ENCODE measurements at regions of chr15 and their contacts with region 1.

Region 1: DNA sequence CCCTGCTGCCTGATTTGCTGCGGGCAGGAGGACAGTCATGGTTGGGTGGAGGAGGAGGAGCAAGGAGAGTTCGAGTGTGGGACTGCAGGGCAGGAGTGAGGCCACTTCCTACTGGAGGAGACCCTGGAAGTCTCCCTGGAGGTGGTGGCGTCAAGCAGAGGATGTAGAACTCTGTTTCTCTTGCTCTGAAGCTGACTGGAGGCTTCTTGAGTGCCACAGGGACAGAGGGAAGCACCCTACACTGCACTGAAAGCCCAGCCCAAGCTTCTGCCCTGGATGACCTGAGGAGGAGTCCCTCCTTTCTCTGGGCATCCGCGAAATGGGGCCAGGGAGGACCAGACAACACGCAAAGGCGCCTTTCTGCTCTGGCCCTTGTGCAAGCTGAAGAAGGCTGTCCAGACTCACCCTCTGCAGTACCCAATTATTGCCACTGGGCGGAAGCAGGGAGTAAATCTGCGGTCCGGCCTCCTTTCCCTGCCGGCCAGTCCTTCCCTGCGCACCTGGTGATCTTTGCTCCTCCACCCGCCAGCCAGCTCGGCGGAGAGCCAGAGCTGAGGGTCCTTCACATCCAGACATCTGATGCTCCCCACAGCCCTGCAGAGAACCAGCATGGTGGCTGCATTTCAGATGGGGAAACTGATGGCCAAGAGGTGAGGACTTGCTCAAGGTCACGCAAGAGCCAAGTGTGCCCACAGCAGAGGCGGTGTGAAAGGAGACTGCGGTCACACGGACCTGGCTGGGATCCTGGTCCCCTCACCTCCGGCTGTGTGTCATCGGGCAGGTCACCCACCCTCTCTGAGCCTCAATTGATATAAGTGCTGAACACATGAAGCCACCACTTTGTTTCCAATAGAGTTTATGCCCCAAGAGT is 207.1 kb downstream of the TBC1D2B start:
- DNase-seq: peak; percentile 92
- ATAC-seq: peak; percentile 78
- H3K4me3 Mint-ChIP-seq: no peak overlapping the region
- H3K27ac Mint-ChIP-seq: no peak overlapping the region
- H3K4me1 Mint-ChIP-seq: peaks cover 4% of the 10 kb centered on the region; the same call in 1 of the 2 replicates
- H3K27me3 Mint-ChIP-seq: no peaks in the 10 kb centered on the region; the same call in none of the 2 replicates
- CTCF ChIP-seq: peak; percentile 90

Region 2: GRCh38 chr15:77642793-77643430 is 227.5 kb before region 1 on chr15:
- CTCF ChIA-PET with region 1: interaction called, 10 read pairs
- POLR2A ChIA-PET with region 1: no interaction called
- DNase-seq: no peak
- ATAC-seq: peak; percentile 14
- H3K4me3 Mint-ChIP-seq: no peak overlapping the region
- H3K27ac Mint-ChIP-seq: no peak overlapping the region
- H3K4me1 Mint-ChIP-seq: peaks cover 13% of the 10 kb centered on the region
- H3K27me3 Mint-ChIP-seq: no peaks in the 10 kb centered on the region
- CTCF ChIP-seq: no peak

Region 3: GRCh38 chr15:77810130-77810571 is 60.3 kb before region 1 on chr15:
- CTCF ChIA-PET with region 1: interaction called, 11 read pairs
- POLR2A ChIA-PET with region 1: no interaction called
- DNase-seq: no peak
- ATAC-seq: peak; percentile 14; the same call in 1 of the 2 replicates
- H3K4me3 Mint-ChIP-seq: no peak overlapping the region
- H3K27ac Mint-ChIP-seq: peak overlapping the region; percentile 82
- H3K4me1 Mint-ChIP-seq: peaks cover 29% of the 10 kb centered on the region
- H3K27me3 Mint-ChIP-seq: no peaks in the 10 kb centered on the region
- CTCF ChIP-seq: no peak

Region 4: DNA sequence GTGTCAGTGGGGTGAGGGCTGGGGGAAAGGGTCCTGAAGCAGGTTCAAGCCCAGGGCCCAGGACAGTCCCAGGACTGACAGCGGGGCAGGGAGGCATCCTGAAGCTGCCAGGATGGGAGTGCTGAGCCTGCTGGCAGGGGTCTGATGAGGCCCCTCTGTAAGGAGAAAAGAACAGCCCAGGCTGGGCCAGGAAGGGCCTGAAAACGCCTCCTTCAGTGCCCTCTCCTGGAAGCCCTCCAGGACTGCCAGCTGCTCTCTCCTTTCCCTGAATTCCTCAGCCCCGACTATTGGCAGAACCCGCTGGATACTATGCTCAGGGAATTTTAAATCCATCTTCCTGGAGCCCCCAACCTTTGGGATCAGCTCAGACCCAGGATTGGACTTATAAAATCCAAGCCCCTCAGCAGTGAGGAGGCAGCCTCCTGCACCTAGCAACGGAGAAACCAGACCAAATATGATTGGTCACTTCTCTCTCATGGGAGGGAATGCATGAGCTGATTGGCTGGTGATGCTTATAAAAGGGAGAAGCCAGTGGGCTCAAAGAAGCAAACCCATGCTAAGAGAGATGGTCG is 34.2 kb before region 1 on chr15:
- CTCF ChIA-PET with region 1: interaction called, 23 read pairs
- POLR2A ChIA-PET with region 1: no interaction called
- DNase-seq: no peak
- ATAC-seq: peak; percentile 84
- H3K4me3 Mint-ChIP-seq: no peak overlapping the region
- H3K27ac Mint-ChIP-seq: no peak overlapping the region
- H3K4me1 Mint-ChIP-seq: peaks cover 16% of the 10 kb centered on the region
- H3K27me3 Mint-ChIP-seq: no peaks in the 10 kb centered on the region; the same call in 1 of the 2 replicates
- CTCF ChIP-seq: no peak

Region 5: DNA sequence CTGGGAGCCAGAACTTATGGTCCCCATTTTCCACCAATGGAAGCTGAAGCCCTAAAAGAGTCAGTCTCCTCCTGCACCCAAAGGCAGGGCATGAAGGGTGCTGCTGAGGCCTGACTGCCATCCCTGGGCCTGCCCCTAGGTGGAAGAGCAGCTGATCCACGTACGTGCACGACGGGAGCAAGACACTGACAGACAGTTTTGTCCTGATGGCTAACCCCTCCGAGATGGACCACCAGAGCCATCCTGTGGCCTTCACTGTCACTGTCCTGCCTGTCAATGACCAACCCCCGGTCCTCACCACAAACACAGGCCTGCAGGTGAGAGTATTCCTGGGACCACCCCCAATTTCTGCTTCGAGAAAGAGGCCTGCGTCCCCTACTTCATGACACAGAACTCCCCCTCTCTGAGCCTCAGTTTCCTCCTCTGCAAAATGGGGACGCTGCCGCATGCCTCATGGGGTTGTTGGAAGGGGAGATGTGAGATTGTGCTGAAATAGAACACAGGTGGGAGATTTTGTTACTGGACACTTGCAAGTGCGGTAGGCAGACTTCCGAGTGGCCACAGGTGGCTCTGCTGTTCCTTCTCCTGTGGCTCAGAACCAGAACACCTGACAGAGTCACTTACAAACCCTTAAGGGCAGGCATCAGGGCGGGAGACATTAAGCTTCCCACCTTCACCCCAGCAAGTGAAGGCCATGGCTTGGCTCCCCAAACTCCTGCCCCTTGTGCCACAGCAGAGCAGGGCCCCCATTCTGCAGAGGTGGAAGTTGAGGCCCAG is 31.7 kb after region 1 on chr15:
- CTCF ChIA-PET with region 1: interaction called, 10 read pairs
- POLR2A ChIA-PET with region 1: no interaction called
- DNase-seq: peak; percentile 50
- ATAC-seq: no peak
- H3K4me3 Mint-ChIP-seq: no peak overlapping the region
- H3K27ac Mint-ChIP-seq: no peak overlapping the region
- H3K4me1 Mint-ChIP-seq: no peaks in the 10 kb centered on the region
- H3K27me3 Mint-ChIP-seq: no peaks in the 10 kb centered on the region
- CTCF ChIP-seq: no peak

Region 6: GRCh38 chr15:77907824-77908751 is 37.7 kb after region 1 on chr15:
- CTCF ChIA-PET with region 1: interaction called, 10 read pairs
- POLR2A ChIA-PET with region 1: no interaction called
- DNase-seq: peak; percentile 85
- ATAC-seq: peak; percentile 88
- H3K4me3 Mint-ChIP-seq: no peak overlapping the region
- H3K27ac Mint-ChIP-seq: no peak overlapping the region
- H3K4me1 Mint-ChIP-seq: peaks cover 17% of the 10 kb centered on the region
- H3K27me3 Mint-ChIP-seq: peaks cover 3% of the 10 kb centered on the region; the same call in 1 of the 2 replicates
- CTCF ChIP-seq: 0 out of 2 replicates have a peak, but pooled peaks have one; percentile 36

Region 7: DNA sequence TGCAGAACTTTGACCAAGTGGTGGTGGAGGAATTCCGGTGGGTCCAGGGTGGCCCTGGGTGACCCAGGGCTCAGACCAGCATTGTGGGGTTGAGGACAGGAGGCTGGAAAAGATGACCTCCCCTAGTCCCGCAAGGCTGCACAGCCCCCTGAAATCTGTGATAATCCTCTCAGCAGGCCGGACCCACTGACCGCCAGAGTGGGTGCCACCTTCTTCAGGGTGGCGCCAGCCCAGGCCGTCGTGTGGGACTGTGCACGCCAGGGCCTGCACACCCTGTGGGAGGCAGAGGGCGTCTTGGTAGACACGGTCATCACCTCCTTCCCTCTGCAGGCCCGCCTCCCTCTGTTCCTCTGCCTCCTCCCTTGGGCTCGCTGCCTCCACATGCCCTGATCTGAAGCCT is 69.4 kb after region 1 on chr15:
- CTCF ChIA-PET with region 1: no interaction called
- POLR2A ChIA-PET with region 1: no interaction called
- DNase-seq: no peak
- ATAC-seq: no peak
- H3K4me3 Mint-ChIP-seq: no peak overlapping the region
- H3K27ac Mint-ChIP-seq: no peak overlapping the region
- H3K4me1 Mint-ChIP-seq: peaks cover 14% of the 10 kb centered on the region
- H3K27me3 Mint-ChIP-seq: peaks cover 11% of the 10 kb centered on the region
- CTCF ChIP-seq: no peak

Region 8: GRCh38 chr15:78146432-78147159 is 276.2 kb after region 1 on chr15:
- CTCF ChIA-PET with region 1: no interaction called
- POLR2A ChIA-PET with region 1: no interaction called
- DNase-seq: no peak
- ATAC-seq: no peak
- H3K4me3 Mint-ChIP-seq: no peak overlapping the region; the same call in 1 of the 2 replicates
- H3K27ac Mint-ChIP-seq: no peak overlapping the region
- H3K4me1 Mint-ChIP-seq: peaks cover 23% of the 10 kb centered on the region
- H3K27me3 Mint-ChIP-seq: peaks cover 4% of the 10 kb centered on the region; the same call in 1 of the 2 replicates
- CTCF ChIP-seq: no peak